ENCODE measurements at regions of chr18 and their contacts with region 1.

Region 1: GRCh38 chr18:12376718-12377555 is at the start of gene AFG3L2:
- DNase-seq: peak; percentile 100
- H3K4me3 Mint-ChIP-seq: peak within 1 kb of the TSS; percentile 94
- H3K27ac Mint-ChIP-seq: peak within 1 kb of the TSS; percentile 96
- H3K4me1 Mint-ChIP-seq: peaks cover 39% of the 10 kb centered on the region
- H3K27me3 Mint-ChIP-seq: peaks cover 9% of the 10 kb centered on the region
- total RNA-seq, gene AFG3L2: 71.8 and 74.6 TPM in 2 replicates

Region 2: GRCh38 chr18:11980555-11981382 is 396.2 kb before region 1 on chr18:
- intact Hi-C with region 1: loop called (anchors 2 kb)
- DNase-seq: peak; percentile 99
- H3K4me3 Mint-ChIP-seq: peak overlapping the region; percentile 91
- H3K27ac Mint-ChIP-seq: peak overlapping the region; percentile 89
- H3K4me1 Mint-ChIP-seq: peaks cover 17% of the 10 kb centered on the region
- H3K27me3 Mint-ChIP-seq: peaks cover 10% of the 10 kb centered on the region

Region 3: GRCh38 chr18:12391618-12392165 is 14.8 kb after region 1 on chr18:
- intact Hi-C with region 1: no loop called
- DNase-seq: peak; percentile 85
- H3K4me3 Mint-ChIP-seq: no peak overlapping the region
- H3K27ac Mint-ChIP-seq: no peak overlapping the region
- H3K4me1 Mint-ChIP-seq: no peaks in the 10 kb centered on the region
- H3K27me3 Mint-ChIP-seq: peaks cover 6% of the 10 kb centered on the region

Region 4: GRCh38 chr18:12408247-12408869 is 31.4 kb after region 1 on chr18:
- intact Hi-C with region 1: loop called (anchors 1 kb)
- DNase-seq: no peak
- H3K4me3 Mint-ChIP-seq: peak overlapping the region; percentile 79
- H3K27ac Mint-ChIP-seq: peak overlapping the region; percentile 72
- H3K4me1 Mint-ChIP-seq: peaks cover 33% of the 10 kb centered on the region
- H3K27me3 Mint-ChIP-seq: peaks cover 35% of the 10 kb centered on the region

Region 5: DNA sequence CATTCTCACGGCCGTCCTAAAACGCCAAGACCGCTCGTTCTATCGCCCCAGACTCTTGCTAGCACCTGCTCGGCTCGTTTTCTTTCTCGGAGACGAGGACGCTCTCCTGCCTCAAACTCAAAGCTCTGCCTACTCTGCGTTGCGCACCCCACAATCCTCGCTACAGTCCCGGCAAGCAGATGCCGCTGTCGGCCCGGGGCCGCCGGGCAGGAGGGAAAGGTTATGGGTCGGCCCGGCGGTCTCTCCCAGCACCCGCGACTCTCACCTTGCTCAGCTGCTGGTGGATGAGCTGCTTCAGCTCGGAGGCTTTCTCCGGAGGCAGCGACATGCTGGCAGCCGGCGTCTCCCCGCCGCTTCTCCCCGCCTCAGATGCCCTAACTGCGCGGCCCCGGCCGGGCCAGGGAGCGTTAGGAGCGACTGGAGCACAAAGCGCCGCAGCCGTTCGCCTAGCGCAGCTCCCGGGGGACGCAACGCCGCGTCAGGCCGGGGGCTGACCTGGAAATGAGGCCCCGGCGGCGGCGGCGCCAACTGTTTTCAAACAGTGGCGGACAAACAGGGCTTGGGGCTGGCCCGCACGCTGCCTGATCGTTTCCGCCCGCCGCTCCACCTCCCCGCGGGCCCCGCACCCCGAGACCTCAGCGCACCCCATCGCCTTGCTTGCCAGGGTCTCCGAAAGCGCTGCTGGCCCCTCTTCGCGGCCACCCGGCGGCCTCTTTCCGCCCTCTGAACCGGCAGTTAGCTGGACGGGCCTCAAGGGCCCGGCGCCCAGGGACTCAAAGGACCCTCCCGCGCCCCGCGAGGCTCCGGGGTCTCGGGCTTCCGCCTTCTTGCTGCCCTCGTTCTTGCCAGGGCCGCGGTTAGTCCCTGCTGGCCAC is 325.5 kb after region 1 on chr18 and contains the starts of genes CEP76 and PSMG2:
- intact Hi-C with region 1: loop called (anchors 1 kb)
- DNase-seq: peak; percentile 96
- H3K4me3 Mint-ChIP-seq: peak within 1 kb of the TSS; percentile 97
- H3K27ac Mint-ChIP-seq: peak within 1 kb of the TSS; percentile 97
- H3K4me1 Mint-ChIP-seq: peaks cover 36% of the 10 kb centered on the region
- H3K27me3 Mint-ChIP-seq: no peaks in the 10 kb centered on the region
- total RNA-seq, gene CEP76: 14.4 and 16.3 TPM in 2 replicates
- total RNA-seq, gene PSMG2: 109 and 111 TPM in 2 replicates

Region 6: GRCh38 chr18:12947355-12948041 is 570.6 kb after region 1 on chr18 and contains the start of gene SEH1L:
- intact Hi-C with region 1: loop called (anchors 1 kb)
- DNase-seq: peak; percentile 99
- H3K4me3 Mint-ChIP-seq: peak within 1 kb of the TSS; percentile 92
- H3K27ac Mint-ChIP-seq: peak within 1 kb of the TSS; percentile 97
- H3K4me1 Mint-ChIP-seq: peaks cover 27% of the 10 kb centered on the region
- H3K27me3 Mint-ChIP-seq: no peaks in the 10 kb centered on the region
- total RNA-seq, gene SEH1L: 132 TPM in 2 replicates